Lower leg skin (tissue), 4 donors: ENCODE measurements at regions of chr9 and their contacts with region 1.

Region 1: GRCh38 chr9:15606643-15607472 is 54.0 kb downstream of the CCDC171 start:
- DNase-seq: no peak
- H3K4me3 ChIP-seq: no peak overlapping the region
- CTCF ChIP-seq: no peak
- POLR2A ChIP-seq: no peak

Region 2: GRCh38 chr9:15211160-15211814 is 395.6 kb before region 1 on chr9:
- intact Hi-C with region 1: loop called (anchors 10 kb)
- DNase-seq: peak in 1 of 2 donors; percentile 79
- H3K4me3 ChIP-seq: no peak overlapping the region
- CTCF ChIP-seq: peak in 1 of 3 donors; percentile 66
- POLR2A ChIP-seq: no peak

Region 3: GRCh38 chr9:15622318-15622971 is 15.6 kb after region 1 on chr9:
- intact Hi-C with region 1: no loop called
- DNase-seq: no peak
- H3K4me3 ChIP-seq: no peak overlapping the region
- CTCF ChIP-seq: no peak
- POLR2A ChIP-seq: no peak